Common myeloid progenitor, CD34-positive (primary cell): ENCODE measurements at regions of chr15 and their contacts with region 1.

Region 1: DNA sequence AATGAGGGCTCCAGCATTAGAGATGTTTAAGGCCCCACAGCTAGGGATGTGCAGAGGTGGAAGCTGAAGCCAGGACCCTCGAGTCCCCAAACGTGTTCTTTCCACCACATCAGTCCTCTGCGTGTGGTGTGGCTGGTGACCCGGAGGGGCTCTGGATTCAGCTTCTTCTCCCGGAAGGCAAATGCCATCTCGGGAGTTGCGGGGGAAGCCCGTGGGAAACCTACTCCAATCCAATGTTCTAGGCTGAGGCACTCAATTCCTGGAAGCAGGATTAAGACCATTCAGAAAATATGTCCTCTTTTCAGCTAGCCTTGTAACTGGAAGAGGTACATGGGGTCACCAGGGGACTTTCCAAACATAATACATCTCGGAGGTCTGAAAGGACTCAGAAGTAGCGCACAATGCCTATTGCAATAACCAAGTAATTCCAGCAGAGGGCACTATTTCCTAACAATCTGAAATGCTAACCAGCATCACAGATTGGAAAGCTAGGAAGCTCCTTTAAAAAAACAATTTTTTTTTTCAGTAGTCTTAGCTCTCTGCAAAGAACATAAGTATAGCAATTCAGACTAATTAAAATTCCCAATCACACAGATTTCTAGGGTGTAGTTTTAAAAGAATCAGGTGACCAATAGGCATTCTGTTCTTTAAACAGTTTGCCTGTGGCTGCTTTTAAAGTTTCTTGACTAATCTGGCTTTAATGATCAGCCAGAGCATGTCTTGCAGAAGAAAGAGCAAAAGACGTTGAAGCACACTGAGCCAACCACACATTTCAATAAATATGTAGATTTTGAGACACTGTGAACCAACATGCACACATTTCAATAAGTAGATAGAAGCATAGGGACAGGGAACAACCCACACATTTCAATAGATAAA is 36.1 kb downstream of the BNC1 start:
- DNase-seq: peak; percentile 66 to 81 (median 68)
- H3K4me3 ChIP-seq: no peak overlapping the region
- H3K27ac ChIP-seq: no peak overlapping the region
- H3K4me1 ChIP-seq: no peaks in the 10 kb centered on the region
- H3K27me3 ChIP-seq: peaks cover 3 to 38% (median 6%) of the 10 kb centered on the region in 5 experiments

Region 2: DNA sequence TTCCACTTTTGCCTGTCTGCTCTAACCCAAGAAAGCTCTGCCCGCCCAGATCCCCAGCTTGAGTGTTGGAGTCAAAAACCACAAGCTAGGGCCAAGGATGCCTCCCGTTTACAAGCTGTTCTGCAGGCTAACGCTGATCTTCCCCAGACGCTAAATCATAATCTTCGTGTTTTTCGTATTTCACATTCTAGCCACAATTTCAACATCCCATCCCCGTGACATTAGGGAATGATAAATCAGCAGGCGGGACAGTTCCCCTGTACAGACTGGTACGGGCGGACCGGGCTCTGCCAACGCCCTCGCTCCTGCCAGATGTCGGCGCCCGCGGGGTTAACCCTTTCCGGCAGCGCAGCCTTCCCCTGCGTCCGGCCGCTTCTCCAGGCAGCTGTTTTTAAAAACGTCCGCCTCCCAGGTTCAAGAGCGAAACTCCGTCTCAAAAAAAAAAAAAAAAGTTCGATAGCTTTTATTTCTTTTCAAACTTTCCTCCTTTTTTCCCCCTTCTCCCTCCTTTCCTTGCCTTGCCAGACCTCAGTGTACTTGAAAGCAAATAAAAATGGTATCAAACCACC is 117.1 kb after region 1 on chr15:
- CTCF ChIA-PET with region 1: interaction called, 10 read pairs
- POLR2A ChIA-PET with region 1: no interaction called
- DNase-seq: peak; percentile 39 to 73 (median 66)
- H3K4me3 ChIP-seq: peak overlapping the region in 6 of 7 experiments; percentile 20 to 71 (median 47)
- H3K27ac ChIP-seq: no peak overlapping the region
- H3K4me1 ChIP-seq: peaks cover 2 to 12% (median 7%) of the 10 kb centered on the region in 4 experiments
- H3K27me3 ChIP-seq: peaks cover 3 to 54% (median 28%) of the 10 kb centered on the region in 5 experiments

Region 3: DNA sequence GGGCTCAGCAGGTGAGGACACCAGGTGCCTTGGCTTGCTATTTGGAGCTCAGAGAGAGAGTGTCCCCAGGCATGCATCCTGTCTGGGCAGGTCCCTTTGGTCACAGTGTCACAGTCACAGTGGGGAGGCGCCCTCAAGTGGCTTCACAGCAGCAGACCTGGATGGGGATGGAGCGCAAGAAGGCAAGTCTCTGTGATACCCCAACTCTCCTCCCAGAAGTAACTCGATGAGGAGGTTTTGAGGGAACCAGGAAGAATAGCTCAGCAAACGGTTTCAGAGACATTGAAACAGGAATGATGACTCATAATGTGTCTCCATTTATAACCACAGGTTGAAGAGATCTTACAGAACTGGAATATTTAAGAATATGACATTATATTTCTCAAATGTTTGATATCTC is 132.3 kb after region 1 on chr15:
- CTCF ChIA-PET with region 1: interaction called, 15 read pairs
- POLR2A ChIA-PET with region 1: no interaction called
- DNase-seq: peak; percentile 41 to 59 (median 47)
- H3K4me3 ChIP-seq: no peak overlapping the region
- H3K27ac ChIP-seq: no peak overlapping the region
- H3K4me1 ChIP-seq: no peaks in the 10 kb centered on the region
- H3K27me3 ChIP-seq: peaks cover 0 to 52% (median 26%) of the 10 kb centered on the region in 5 experiments

Region 4: DNA sequence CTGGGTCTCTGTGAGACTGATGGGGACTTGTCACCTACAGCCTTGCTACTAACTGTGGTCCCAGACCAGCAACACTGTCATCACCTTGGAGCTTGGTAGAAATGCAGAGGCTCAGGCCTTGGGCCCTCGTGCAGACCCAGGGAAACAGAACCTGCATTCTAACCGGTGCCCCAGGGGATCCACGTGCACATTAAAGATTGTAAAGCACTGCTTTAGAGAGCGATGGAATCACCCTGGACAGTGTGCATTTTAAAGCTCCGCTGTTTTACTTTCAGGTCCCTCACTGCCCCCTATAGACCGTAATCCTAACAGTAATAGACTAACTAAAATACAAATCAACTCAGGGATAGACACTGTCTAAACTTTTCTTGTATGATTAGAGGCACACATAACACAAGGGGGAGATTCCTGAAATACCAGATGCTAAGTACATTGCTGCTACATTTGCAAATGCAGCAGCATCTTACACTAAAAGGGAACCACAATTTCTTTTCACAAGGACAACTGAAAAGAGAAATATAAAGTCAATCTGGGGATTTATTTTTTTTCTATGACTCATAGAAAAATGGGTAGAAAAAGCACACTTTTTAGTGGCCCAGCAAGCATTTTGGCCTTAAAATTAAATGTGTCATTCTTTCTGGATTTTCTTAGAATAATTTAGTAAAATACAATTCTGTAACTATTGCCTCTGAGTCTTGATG is 188.2 kb after region 1 on chr15:
- CTCF ChIA-PET with region 1: interaction called, 43 read pairs
- POLR2A ChIA-PET with region 1: no interaction called
- DNase-seq: peak; percentile 40 to 61 (median 60)
- H3K4me3 ChIP-seq: no peak overlapping the region
- H3K27ac ChIP-seq: no peak overlapping the region
- H3K4me1 ChIP-seq: peaks cover 0 to 3% (median 0%) of the 10 kb centered on the region in 4 experiments
- H3K27me3 ChIP-seq: peaks cover 0 to 8% (median 3%) of the 10 kb centered on the region in 5 experiments

Region 5: DNA sequence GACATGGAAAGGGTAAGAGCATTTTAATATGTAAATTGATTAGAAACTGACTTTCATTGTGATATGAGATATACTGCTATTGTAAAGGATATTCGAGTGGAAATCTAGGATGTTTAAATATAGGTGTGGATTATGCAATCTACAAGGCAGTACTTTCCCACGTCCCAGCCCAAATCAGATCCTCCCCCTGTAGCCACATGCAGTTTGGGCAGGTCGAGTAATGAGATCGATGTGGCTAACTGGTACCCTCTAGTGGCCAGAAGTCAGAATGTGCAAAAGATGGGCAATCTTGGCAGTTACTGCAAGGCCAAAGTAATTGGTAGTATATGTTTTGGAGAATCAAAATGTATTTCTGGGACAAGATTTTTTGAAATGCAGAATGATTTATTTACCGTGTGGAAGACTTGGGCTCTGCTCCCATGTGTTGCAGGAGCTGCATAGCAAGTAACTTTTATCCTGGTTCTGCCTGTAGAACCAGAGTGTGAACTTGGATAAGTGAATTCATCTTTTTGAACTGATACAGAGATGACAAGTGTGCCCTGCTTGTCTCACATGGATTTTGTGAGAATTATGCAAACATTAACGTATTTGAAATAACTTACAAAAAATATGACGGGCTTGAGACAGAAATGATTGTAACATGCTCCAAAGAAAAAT is 311.0 kb after region 1 on chr15:
- CTCF ChIA-PET with region 1: interaction called, 27 read pairs
- POLR2A ChIA-PET with region 1: no interaction called
- DNase-seq: peak; percentile 65 to 78 (median 72)
- H3K4me3 ChIP-seq: no peak overlapping the region
- H3K27ac ChIP-seq: no peak overlapping the region
- H3K4me1 ChIP-seq: no peaks in the 10 kb centered on the region
- H3K27me3 ChIP-seq: peaks cover 0 to 4% (median 0%) of the 10 kb centered on the region in 5 experiments

Region 6: DNA sequence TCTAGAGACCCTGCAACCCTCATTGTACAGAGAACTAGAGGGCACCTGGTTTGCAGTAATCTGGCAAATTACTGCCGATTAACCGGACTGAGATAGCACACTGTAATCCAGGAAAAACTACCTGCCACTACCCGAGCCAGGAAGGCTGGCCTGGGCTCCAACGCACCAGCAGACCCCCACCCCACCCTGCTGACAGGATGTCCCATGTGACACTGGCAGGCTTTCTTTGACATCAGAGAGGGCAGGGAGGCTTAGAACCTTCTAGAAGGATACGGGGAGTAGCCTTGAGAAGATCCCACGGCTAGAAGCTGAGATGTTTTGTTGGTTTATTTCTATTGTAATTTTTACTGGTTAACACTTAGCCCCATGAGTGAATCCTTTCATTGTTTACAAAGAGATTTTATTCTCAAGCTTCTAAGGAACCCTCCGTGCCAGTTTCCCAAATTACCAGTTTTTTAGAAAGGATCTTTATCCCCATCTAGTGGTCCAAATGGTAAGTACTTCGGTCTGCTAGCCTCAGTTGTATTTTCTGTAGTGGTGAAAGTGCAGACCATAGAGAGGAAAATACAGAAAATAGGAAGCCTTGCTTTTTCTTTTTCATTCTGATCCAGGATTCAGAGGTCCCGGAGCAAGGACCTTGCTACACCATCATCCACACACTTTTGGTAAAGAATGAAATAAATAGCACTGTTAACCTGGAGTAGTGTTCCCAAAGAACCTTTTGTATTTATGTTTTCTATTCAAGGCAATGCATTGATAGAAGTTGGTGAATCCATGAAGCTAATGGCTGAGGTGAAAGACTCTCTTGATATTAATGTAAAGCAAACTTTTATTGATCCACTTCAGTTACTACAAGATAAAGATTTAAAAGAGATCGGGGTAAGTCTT is 323.7 kb after region 1 on chr15:
- CTCF ChIA-PET with region 1: interaction called, 11 read pairs
- POLR2A ChIA-PET with region 1: no interaction called
- DNase-seq: peak; percentile 14 to 41 (median 37)
- H3K4me3 ChIP-seq: no peak overlapping the region
- H3K27ac ChIP-seq: no peak overlapping the region
- H3K4me1 ChIP-seq: no peaks in the 10 kb centered on the region
- H3K27me3 ChIP-seq: peaks cover 0 to 2% (median 0%) of the 10 kb centered on the region in 5 experiments